Mucosa of descending colon (tissue), 3 donors: ENCODE measurements at regions of chr11 and their contacts with region 1.

Region 1: GRCh38 chr11:76799066-76799804 is 16.1 kb downstream of the TSKU start:
- DNase-seq: peak; percentile 88 to 90 (median 90)
- ATAC-seq: peak; percentile 90
- H3K4me3 ChIP-seq: no peak overlapping the region
- H3K4me1 ChIP-seq: peaks cover 11% of the 10 kb centered on the region
- CTCF ChIP-seq: peak; percentile 83

Region 2: GRCh38 chr11:76714499-76714898 is 84.7 kb before region 1 on chr11:
- intact Hi-C with region 1: no loop called
- DNase-seq: no peak
- ATAC-seq: no peak
- H3K4me3 ChIP-seq: no peak overlapping the region
- H3K4me1 ChIP-seq: no peaks in the 10 kb centered on the region
- CTCF ChIP-seq: no peak

Region 3: DNA sequence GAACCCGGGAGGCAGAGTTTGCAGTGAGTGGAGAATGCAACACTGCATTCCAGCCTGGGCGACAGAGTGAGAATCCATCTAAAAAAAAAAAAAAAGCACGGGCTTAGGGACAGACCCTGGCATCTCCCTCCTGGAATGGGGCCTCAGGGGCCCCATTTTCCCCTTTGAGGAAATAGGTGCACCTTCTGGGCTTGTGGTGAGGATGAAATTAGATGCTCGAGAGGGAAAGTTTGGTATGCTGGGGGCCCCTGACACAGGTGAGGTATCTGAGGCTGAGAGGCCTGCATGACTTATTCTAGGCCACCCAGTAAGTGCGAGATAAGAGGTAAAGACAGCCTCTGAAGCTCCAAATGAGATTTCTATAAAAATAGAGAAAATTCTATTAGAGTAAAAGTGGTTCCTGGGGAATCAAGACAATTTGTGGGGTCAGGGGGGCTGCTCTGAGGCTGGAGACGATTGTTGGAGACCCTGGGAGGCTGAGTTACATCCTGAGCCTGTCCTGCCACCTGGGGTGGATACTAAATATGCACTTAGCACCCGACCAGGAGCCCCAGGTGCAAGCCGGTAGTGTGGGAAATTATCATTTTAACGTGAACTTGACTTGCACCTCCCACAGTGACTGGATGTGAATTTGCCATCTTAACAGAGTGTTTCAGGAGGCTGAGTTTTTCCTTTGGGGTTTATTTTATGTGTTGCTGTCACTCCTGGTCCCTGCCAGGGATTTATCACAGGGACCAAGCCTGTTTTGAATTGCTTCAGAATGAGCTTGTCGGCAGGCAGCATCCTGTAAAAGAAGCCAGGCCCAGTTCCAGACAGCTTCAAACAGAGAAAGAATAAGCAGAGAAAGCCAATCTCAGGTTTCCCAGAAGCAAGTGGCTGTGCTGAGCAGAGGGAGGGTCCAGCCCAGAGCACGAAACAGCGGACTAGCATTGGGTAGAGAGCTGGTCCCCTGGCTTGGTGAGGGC is 64.5 kb before region 1 on chr11:
- intact Hi-C with region 1: loop called (anchors 5 kb)
- DNase-seq: no peak
- ATAC-seq: no peak
- H3K4me3 ChIP-seq: no peak overlapping the region
- H3K4me1 ChIP-seq: no peaks in the 10 kb centered on the region
- CTCF ChIP-seq: no peak